ENCODE measurements at regions of chr10 and their contacts with region 1.

Region 1: DNA sequence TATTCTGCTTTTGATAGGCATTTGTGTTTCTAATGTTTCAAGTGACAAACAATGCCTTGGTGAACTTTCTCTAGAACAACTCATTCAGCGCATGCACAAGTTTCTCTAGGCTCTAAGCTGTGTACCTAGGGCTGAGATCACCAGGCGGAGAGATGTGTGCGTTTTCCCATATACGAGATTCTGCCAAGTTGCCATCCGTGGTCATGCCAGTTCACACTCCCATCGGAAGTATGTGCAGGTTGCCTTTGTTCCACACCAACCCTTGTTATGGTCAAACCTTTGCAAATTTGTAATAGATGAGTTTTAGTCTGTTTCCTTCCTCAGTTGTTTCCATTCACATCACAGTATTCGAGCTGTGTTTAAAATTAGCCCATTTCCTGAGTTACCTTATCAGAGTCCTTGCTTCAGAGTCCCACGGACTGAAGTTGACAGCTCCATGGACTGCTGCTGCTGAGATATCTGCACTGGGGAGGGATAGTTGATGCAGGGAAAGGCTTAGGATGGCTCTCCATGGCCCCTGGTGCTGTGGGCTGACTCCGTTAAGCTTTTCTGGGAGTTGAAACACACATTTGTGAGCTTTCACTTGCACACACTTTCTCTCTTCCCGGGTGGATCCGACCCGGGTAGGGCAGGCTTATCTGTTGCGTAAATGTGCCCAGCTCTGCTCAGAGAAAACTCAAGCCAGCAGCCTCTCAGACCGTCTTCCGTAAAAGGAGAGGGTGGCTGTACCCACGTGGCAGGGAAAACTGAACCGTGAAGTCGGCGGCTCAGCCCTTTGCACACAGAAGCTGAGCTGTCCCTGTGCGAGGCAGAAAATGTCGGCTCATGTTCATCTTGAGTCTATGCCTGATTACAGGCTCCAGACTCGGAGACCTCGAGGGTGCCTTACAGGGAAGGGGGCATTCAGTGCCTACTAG is 49.4 kb downstream of the HK1 start:
- DNase-seq: peak; percentile 61 to 74
- ATAC-seq: peak; percentile 79 to 90 (median 90)
- H3K4me3 ChIP-seq: peak overlapping the region in 7 of 10 donors; percentile 21 to 40 (median 32)
- H3K27ac ChIP-seq: peak overlapping the region; percentile 67 to 89 (median 85)
- H3K4me1 ChIP-seq: peaks cover 12 to 99% (median 94%) of the 10 kb centered on the region in 9 donors
- H3K27me3 ChIP-seq: no peaks in the 10 kb centered on the region
- CTCF ChIP-seq: no peak

Region 2: DNA sequence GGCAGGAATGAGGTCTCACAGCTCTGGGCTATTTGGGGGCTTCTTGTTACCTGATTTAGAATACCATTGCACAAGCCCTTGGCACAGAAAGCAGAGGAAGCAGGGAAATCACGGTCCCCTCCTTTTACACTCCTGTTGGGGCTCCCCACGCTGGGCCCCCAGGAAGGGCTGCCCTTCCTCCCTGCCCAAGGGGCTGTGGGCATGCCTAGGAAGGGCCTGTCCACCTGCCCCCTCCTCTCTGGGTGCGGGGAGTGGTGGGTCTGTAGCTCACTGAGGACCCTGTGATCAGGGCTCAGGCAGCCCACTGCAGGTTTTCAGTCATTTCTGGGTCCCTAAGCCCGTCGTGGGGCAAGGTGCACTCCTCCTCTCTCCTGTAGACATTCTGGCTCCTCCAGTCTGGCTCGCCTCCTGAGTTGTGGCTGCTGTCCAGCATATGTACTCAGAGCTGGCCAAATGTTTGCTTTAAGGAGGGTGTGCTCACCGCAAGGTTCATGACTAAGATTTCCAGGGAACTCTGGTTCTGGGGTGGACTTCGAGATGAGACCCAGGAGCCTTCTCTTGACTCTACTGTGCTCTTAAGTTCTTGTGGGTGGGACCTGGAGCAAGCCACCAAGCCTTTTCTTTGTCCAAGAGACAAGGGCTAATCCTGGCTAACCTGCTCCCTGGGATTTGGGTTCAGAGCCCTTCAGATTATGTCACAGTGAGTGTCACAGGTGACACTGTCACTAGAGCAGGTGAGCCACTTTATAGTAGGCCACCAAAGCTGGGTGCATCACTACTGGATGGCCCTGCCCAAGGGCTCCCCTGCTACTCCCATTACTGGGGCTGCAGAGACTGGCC is 33.0 kb after region 1 on chr10:
- intact Hi-C with region 1: loop called in 2 of 10 experiments (anchors 5 kb)
- DNase-seq: peak; percentile 64 to 72
- ATAC-seq: peak; percentile 31 to 83 (median 78)
- H3K4me3 ChIP-seq: no peak overlapping the region
- H3K27ac ChIP-seq: peak overlapping the region; percentile 31 to 83 (median 54)
- H3K4me1 ChIP-seq: peaks cover 37 to 76% (median 68%) of the 10 kb centered on the region in 9 donors
- H3K27me3 ChIP-seq: no peaks in the 10 kb centered on the region
- CTCF ChIP-seq: no peak

Region 3: DNA sequence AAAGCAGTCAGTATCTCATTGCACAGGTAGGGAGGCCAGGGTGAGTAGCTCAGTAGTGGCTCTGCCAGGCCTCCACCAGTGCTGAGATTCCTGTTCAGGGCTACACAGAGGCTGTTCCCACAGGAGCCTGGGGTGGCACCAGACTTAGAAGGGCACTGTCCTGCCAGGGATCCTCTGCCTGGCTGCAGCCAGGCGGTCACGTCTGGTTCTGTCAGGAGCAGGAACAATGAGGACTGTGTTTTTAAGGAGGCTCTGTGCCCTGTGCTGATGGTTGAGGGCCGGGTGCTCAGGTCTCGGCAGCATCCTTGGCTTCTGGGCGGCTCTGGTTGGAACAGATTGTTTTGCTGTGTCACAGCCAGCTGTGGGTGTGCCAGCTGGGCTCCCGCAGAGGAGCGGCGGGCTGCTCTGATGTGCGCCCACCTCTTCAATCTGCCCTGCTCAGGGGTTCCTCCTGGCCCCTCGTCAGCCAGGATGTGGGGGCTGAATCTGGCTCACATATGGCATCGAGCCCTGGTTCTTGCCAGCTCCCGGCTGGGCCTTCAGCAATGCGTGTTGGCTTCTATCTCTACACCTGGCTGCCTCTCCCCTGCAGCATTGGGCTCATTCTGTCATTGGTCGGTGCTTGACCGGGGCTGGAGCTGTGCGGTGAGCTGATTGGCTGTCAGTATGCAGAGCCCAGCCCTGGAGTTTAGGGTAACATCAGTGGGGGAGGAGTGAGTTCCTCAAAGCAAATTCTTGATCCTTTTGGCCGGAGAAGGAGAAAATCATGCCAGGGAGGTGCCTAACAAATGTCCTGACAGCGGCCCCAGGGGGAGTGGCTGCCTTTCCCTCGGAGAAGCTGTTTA is 47.8 kb after region 1 on chr10:
- intact Hi-C with region 1: loop called in 4 of 10 experiments (anchors 5 to 10 kb)
- DNase-seq: peak; percentile 45 to 51
- ATAC-seq: peak; percentile 64 to 83 (median 74)
- H3K4me3 ChIP-seq: no peak overlapping the region
- H3K27ac ChIP-seq: peak overlapping the region in 9 of 10 donors; percentile 14 to 84 (median 59)
- H3K4me1 ChIP-seq: peaks cover 23 to 50% (median 38%) of the 10 kb centered on the region in 9 donors
- H3K27me3 ChIP-seq: no peaks in the 10 kb centered on the region
- CTCF ChIP-seq: no peak

Measured in heart right ventricle (tissue), 16 donors.